ENCODE measurements at regions of chr3 and their contacts with region 1.

Region 1: DNA sequence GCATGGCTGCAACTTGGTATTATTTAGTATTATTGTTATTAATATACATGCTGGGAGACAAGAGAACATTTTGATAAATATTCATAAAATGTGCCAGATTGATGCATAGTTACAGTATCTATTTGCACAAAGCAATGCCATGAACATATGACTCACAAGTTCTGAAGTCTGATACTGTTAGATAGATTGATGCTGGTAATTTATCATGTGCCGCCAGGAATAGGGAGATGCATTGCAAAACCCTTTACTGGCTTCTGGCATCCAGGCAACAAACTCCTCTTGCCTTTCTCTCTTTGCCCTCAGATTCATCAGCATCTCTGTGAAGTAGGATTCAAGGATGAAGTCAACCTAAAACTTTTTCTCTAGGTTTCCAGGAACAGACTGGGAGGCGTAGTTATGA is 41.0 kb upstream of the SLC25A26 start:
- DNase-seq: no peak
- H3K4me3 ChIP-seq: no peak overlapping the region
- H3K27ac ChIP-seq: no peak overlapping the region
- H3K27me3 ChIP-seq: no peaks in the 10 kb centered on the region
- CTCF ChIP-seq: no peak

Region 2: GRCh38 chr3:65604863-65605526 is 574.8 kb before region 1 on chr3:
- intact Hi-C with region 1: loop called in 1 of 2 experiments (anchors 10 kb)
- DNase-seq: no peak
- H3K4me3 ChIP-seq: no peak overlapping the region
- H3K27ac ChIP-seq: no peak overlapping the region
- H3K27me3 ChIP-seq: no peaks in the 10 kb centered on the region
- CTCF ChIP-seq: no peak

Region 3: GRCh38 chr3:65827076-65827475 is 352.7 kb before region 1 on chr3:
- intact Hi-C with region 1: no loop called
- DNase-seq: no peak
- H3K4me3 ChIP-seq: no peak overlapping the region
- H3K27ac ChIP-seq: no peak overlapping the region
- H3K27me3 ChIP-seq: no peaks in the 10 kb centered on the region
- CTCF ChIP-seq: no peak

Region 4: DNA sequence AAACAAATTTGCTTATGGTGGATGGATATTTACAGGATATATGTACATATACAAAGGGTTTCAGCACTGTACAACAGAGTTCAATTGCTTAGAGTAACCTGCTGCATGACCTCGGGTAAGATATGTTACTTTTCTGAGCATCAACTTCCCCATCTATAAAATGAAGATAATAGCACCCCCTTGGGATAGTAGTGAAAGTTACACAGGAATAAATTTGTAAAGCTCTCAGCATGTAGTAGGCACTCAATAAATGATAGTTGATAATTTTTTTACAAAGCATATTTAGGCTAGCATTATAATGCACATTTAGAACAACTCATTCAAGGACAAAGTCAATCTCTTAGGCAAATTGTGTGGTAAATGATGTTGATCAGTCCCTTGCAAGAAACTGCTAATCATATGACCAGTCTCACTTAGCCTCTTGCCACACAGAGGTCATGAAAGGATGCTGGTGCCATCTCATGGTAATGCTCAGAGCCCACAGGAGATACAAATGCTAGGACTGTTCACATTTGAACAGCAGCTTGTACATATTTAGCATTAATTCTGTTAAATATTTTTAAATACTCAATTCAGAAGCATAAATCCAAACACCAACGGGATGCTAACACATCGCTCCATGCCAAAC is 264.9 kb before region 1 on chr3:
- intact Hi-C with region 1: loop called in 1 of 2 experiments (anchors 10 kb)
- DNase-seq: no peak
- H3K4me3 ChIP-seq: no peak overlapping the region
- H3K27ac ChIP-seq: no peak overlapping the region
- H3K27me3 ChIP-seq: no peaks in the 10 kb centered on the region
- CTCF ChIP-seq: peak in 27 of 56 donors; percentile 8 to 49 (median 25)

Measured in dorsolateral prefrontal cortex (tissue), 120 donors.